ENCODE measurements at regions of chr14 and their contacts with region 1.

Region 1: GRCh38 chr14:105999361-106000028 is 473.1 kb downstream of the TMEM121 start:
- DNase-seq: peak; percentile 84
- H3K4me3 Mint-ChIP-seq: no peak overlapping the region
- H3K27ac Mint-ChIP-seq: peak overlapping the region; percentile 83
- H3K4me1 Mint-ChIP-seq: peaks cover 56% of the 10 kb centered on the region
- H3K27me3 Mint-ChIP-seq: no peaks in the 10 kb centered on the region

Region 2: DNA sequence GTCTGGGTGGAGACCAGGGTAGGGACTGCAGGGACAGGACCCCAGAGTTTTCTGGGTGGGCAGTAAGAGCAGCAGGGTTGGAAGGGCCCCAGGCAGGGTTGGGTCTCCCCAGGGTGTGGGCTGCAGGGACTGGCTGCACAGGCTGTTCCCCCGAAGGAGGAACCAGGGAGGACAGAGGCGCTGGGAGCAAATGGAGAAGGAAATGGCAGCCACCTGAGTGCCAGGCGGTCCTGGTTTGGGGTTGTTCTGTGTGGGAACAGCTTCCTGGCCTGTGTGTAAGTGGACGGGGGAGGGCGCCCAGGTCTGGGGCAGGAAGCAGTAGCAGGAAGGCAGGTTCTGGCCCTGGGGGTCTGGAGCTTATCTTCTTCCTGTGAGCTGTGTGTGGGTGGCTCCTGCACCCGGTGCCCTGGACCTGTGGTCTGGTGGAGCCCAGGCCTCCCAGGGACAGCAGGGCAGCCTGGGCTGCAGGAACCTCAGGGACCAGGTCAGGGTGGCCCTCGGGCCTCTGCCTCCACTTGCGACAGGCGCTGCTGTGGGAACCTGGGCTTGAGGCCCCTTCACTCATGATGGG is 100.3 kb before region 1 on chr14:
- CTCF ChIA-PET with region 1: no interaction called
- DNase-seq: no peak
- H3K4me3 Mint-ChIP-seq: no peak overlapping the region
- H3K27ac Mint-ChIP-seq: no peak overlapping the region
- H3K4me1 Mint-ChIP-seq: peaks cover 30% of the 10 kb centered on the region
- H3K27me3 Mint-ChIP-seq: peaks cover 99% of the 10 kb centered on the region

Region 3: GRCh38 chr14:105926373-105927095 is 73.0 kb before region 1 on chr14:
- CTCF ChIA-PET with region 1: no interaction called
- DNase-seq: peak; percentile 16
- H3K4me3 Mint-ChIP-seq: no peak overlapping the region
- H3K27ac Mint-ChIP-seq: no peak overlapping the region
- H3K4me1 Mint-ChIP-seq: peaks cover 16% of the 10 kb centered on the region
- H3K27me3 Mint-ChIP-seq: peaks cover 73% of the 10 kb centered on the region

Region 4: GRCh38 chr14:105944632-105945610 is 54.6 kb before region 1 on chr14:
- CTCF ChIA-PET with region 1: interaction called, 12 read pairs
- DNase-seq: peak; percentile 87
- H3K4me3 Mint-ChIP-seq: no peak overlapping the region
- H3K27ac Mint-ChIP-seq: no peak overlapping the region
- H3K4me1 Mint-ChIP-seq: peaks cover 25% of the 10 kb centered on the region
- H3K27me3 Mint-ChIP-seq: peaks cover 47% of the 10 kb centered on the region

Region 5: GRCh38 chr14:105974902-105975301 is 24.6 kb before region 1 on chr14:
- CTCF ChIA-PET with region 1: interaction called, 32 read pairs
- DNase-seq: peak; percentile 72
- H3K4me3 Mint-ChIP-seq: no peak overlapping the region
- H3K27ac Mint-ChIP-seq: no peak overlapping the region
- H3K4me1 Mint-ChIP-seq: peaks cover 1% of the 10 kb centered on the region
- H3K27me3 Mint-ChIP-seq: peaks cover 31% of the 10 kb centered on the region

Region 6: GRCh38 chr14:105982664-105983063 is 16.8 kb before region 1 on chr14:
- CTCF ChIA-PET with region 1: interaction called, 19 read pairs
- DNase-seq: no peak
- H3K4me3 Mint-ChIP-seq: no peak overlapping the region
- H3K27ac Mint-ChIP-seq: peak overlapping the region; percentile 68
- H3K4me1 Mint-ChIP-seq: peaks cover 55% of the 10 kb centered on the region
- H3K27me3 Mint-ChIP-seq: peaks cover 7% of the 10 kb centered on the region

Region 7: DNA sequence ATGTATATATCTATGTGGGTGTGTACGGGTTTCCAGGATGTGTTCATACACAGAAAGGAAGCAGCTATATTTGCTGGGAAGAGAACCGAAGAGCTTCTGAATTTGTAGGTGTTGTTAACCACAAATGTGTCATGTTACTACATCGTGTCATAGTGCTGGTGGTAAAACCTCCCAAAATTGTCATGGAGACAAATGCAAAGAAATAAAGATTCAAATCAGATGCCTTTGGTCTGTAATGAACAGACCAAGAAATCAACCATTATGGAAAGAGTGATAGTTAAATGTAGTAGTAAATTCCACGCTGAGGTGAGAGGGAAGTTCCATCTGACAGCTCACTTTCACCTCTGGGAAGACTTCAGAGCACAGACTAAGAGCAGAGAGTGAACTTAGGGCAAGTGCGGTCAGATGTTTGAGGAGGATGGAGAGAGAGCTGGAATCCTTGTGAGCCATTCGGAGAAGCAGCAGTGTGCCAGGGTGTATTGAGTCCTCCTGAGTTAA is 14.4 kb after region 1 on chr14:
- CTCF ChIA-PET with region 1: interaction called, 45 read pairs
- DNase-seq: no peak
- H3K4me3 Mint-ChIP-seq: no peak overlapping the region
- H3K27ac Mint-ChIP-seq: peak overlapping the region; percentile 61
- H3K4me1 Mint-ChIP-seq: peaks cover 53% of the 10 kb centered on the region
- H3K27me3 Mint-ChIP-seq: no peaks in the 10 kb centered on the region

Region 8: DNA sequence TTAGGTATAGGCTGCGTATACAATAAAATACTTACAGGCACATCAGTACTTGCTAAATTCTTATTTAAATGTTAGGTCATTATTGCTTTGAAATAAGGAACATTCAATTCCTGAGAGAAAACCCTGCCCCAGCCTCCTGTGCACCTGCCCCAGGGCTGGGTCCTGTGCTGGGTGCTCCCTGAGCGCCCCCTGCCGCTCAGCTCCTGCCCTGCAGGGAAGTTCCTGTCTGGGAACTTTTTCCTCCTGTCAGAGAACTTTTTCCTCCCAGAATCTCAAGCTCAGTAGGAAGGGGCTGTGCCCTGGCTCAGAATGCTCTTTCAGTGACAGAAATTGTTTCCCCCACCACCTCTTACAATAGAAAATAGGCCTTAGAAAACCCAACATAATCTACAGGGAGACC is 278.0 kb after region 1 on chr14:
- CTCF ChIA-PET with region 1: no interaction called
- DNase-seq: peak; percentile 34
- H3K4me3 Mint-ChIP-seq: no peak overlapping the region
- H3K27ac Mint-ChIP-seq: no peak overlapping the region
- H3K4me1 Mint-ChIP-seq: peaks cover 9% of the 10 kb centered on the region
- H3K27me3 Mint-ChIP-seq: peaks cover 52% of the 10 kb centered on the region

Measured in activated naive CD4-positive, alpha-beta T cell treated with anti-CD3 and anti-CD28 coated beads, Interleukin-2, amount 10 ng/mL, durations not matched to agents 7 days and 5 days (primary cell).